ENCODE measurements at regions of chr14 and their contacts with region 1.

Region 1: DNA sequence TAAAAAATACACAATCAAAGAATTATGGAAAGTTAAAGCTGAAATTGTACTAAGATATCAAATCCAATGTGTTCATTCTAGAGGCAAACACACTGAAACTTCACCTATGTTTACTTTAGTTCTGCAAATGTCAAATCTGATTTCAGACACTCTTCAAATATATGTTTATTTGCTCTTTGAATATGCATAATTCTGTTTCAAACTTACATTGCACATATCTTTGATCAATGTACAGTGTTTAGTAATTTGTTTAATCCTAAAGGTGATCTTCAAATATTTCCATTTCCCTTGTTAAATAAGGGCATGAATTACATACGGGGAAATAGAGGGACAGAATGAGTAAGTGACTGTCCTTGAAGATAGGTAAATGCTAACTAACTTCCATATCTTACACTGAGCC is 605.4 kb upstream of the NOVA1 start:
- DNase-seq: no peak
- H3K4me3 ChIP-seq: no peak overlapping the region
- CTCF ChIP-seq: no peak

Region 2: DNA sequence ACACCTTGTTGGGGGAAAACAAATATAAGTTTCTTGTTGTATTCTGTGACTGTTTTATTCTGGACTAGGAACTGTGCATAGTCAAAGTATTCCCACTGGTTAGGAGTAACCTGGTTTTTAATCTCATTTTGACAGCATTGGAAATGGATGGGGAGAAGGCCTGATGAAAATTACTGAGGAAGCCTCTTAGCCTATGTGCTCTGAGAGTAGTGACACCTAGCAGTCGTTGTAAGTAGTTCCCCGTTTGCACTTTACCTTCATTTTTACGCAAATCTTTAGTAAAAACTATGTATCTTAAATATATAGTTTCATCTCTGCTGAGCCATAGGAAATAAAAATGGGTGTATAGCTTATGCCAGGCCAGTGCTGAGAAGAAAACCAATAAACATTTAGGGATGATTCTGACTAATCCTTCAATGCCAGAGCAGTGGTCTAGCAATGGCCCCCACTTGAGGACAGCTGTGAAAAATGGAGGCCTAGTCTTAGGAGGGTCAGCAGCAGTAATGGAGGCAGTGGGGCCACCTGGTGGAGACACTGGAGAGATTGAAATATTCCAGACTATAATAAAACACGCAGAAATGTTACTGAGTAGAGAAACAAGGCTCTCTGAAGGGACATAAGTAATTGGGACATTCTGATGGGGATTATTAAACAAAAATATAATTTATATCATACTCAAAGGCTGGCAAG is 472.1 kb before region 1 on chr14:
- in situ Hi-C with region 1: no loop called
- DNase-seq: no peak
- H3K4me3 ChIP-seq: no peak overlapping the region
- CTCF ChIP-seq: peak; percentile 42

Region 3: DNA sequence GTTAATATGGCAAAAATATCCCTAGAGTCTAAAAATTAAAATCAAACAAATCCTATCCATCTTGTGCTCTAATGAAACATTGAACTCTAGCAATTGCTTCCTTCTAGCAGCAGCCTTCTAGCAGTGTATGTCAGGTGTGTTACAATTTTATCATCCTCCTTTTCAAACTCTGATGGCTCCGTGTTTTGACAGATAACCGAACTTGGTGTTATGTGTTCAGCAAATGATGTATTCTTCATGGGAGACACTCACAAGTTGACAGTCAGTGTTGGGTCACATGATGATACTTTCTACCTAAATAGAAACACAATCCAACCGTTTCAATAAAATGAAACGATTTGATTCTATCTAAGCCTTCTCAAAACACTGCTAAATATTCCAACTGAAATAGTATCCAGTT is 80.1 kb before region 1 on chr14:
- in situ Hi-C with region 1: no loop called
- DNase-seq: no peak
- H3K4me3 ChIP-seq: no peak overlapping the region
- CTCF ChIP-seq: no peak

Region 4: DNA sequence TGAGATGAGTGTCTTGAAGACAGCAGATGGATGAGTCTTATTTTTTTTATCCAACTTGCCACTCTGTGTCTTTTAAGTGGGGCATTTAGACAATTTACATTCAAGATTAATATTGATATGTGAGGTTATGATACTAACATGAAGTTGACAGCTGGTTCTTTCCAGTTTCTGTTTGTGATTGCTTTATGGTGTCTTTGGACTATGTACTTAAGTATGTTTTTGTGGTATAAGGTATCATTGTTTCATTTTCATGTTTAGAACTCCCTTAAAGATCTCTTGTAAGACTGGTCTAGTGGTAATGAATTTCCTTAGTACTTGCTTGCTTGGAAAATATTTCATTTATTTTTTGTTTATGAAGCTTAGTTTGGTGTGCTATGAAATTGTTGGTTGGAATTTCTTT is 55.1 kb before region 1 on chr14:
- in situ Hi-C with region 1: no loop called
- DNase-seq: no peak
- H3K4me3 ChIP-seq: no peak overlapping the region
- CTCF ChIP-seq: no peak

Region 5: GRCh38 chr14:27267876-27268275 is 64.7 kb after region 1 on chr14:
- in situ Hi-C with region 1: loop called (anchors 5 kb)
- DNase-seq: no peak
- H3K4me3 ChIP-seq: no peak overlapping the region
- CTCF ChIP-seq: no peak